ENCODE measurements at regions of chr2 and their contacts with region 1.

Region 1: GRCh38 chr2:46470114-46470628 is 9.2 kb upstream of the TMEM247 start:
- DNase-seq: no peak
- ATAC-seq: peak; percentile 16; the same call in 2 of the 3 replicates
- H3K4me3 ChIP-seq: no peak overlapping the region
- H3K27ac ChIP-seq: no peak overlapping the region
- H3K4me1 ChIP-seq: no peaks in the 10 kb centered on the region
- H3K27me3 ChIP-seq: no peaks in the 10 kb centered on the region
- CTCF ChIP-seq: no peak
- EP300 ChIP-seq: no peak
- POLR2A ChIP-seq: no peak
- RAD21 ChIP-seq: no peak

Region 2: GRCh38 chr2:46481198-46482193 is 11.3 kb after region 1 on chr2:
- CTCF ChIA-PET with region 1: interaction called, 6 read pairs
- POLR2A ChIA-PET with region 1: interaction called, 4 read pairs
- RAD21 ChIA-PET with region 1: interaction called, 4 read pairs
- SMC1A ChIA-PET with region 1: interaction called, 20 read pairs
- in situ Hi-C with region 1: no loop called
- intact Hi-C with region 1: no loop called
- DNase-seq: no peak
- ATAC-seq: no peak
- H3K4me3 ChIP-seq: no peak overlapping the region
- H3K27ac ChIP-seq: no peak overlapping the region
- H3K4me1 ChIP-seq: peaks cover 15% of the 10 kb centered on the region
- H3K27me3 ChIP-seq: no peaks in the 10 kb centered on the region
- CTCF ChIP-seq: no peak
- EP300 ChIP-seq: no peak
- POLR2A ChIP-seq: no peak
- RAD21 ChIP-seq: no peak

Region 3: GRCh38 chr2:46887028-46887885 is 417.1 kb after region 1 on chr2:
- CTCF ChIA-PET with region 1: interaction called, 4 read pairs
- POLR2A ChIA-PET with region 1: no interaction called
- RAD21 ChIA-PET with region 1: no interaction called
- SMC1A ChIA-PET with region 1: interaction called, 3 read pairs
- in situ Hi-C with region 1: loop called (anchors 5 kb)
- intact Hi-C with region 1: no loop called
- DNase-seq: no peak
- ATAC-seq: no peak
- H3K4me3 ChIP-seq: no peak overlapping the region
- H3K27ac ChIP-seq: no peak overlapping the region
- H3K4me1 ChIP-seq: no peaks in the 10 kb centered on the region
- H3K27me3 ChIP-seq: no peaks in the 10 kb centered on the region; a peak in 1 of 4 replicates
- CTCF ChIP-seq: no peak
- EP300 ChIP-seq: no peak
- POLR2A ChIP-seq: no peak
- RAD21 ChIP-seq: no peak

Measured in GM12878 (cell line).